ENCODE measurements at regions of chr12 and their contacts with region 1.

Region 1: DNA sequence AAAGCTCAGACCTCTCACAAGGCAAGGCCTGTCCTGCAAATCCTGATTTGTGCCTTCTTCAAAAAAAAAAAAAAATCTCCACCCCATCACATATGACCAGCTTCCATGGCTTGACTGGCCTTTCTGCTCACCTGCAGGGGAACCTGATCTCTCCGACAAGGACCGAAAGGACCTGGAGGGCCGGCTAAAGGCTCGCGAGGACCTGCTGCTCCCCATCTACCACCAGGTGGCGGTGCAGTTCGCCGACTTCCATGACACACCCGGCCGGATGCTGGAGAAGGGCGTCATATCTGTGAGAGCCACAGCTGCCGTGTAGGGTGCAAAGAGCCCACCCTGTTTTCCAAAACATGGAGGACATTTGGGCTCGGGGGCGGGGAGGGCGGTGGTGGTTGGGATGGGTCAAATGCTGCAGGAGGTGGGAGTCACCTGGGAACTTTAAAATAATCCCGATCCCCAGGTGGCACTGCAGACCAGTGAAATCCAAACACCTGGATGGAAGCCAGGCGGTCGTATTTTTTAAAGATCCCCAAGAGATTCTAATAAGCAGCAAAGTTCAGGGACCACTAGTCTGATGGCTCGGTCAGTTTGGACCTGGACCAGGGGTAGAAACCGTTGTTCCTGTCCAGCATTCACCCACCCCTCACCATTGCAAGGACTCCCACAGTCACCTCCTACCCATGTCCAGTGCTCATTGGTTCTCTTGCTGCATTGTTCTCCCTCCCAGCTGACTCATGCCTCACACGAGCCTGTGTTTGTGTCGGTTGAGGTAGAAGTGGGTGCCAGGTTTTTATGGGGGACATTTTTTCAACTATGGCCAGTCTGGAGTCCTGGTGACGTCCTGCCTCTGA is 44.8 kb downstream of the FOXN4 start:
- DNase-seq: peak; percentile 7
- H3K4me3 ChIP-seq: no peak overlapping the region
- H3K27ac ChIP-seq: no peak overlapping the region
- H3K27me3 ChIP-seq: no peaks in the 10 kb centered on the region
- CTCF ChIP-seq: peak; percentile 80

Region 2: GRCh38 chr12:109246221-109246620 is 18.1 kb before region 1 on chr12:
- CTCF ChIA-PET with region 1: interaction called, 11 read pairs
- POLR2A ChIA-PET with region 1: no interaction called
- DNase-seq: no peak
- H3K4me3 ChIP-seq: no peak overlapping the region
- H3K27ac ChIP-seq: no peak overlapping the region
- H3K27me3 ChIP-seq: no peaks in the 10 kb centered on the region
- CTCF ChIP-seq: no peak

Region 3: DNA sequence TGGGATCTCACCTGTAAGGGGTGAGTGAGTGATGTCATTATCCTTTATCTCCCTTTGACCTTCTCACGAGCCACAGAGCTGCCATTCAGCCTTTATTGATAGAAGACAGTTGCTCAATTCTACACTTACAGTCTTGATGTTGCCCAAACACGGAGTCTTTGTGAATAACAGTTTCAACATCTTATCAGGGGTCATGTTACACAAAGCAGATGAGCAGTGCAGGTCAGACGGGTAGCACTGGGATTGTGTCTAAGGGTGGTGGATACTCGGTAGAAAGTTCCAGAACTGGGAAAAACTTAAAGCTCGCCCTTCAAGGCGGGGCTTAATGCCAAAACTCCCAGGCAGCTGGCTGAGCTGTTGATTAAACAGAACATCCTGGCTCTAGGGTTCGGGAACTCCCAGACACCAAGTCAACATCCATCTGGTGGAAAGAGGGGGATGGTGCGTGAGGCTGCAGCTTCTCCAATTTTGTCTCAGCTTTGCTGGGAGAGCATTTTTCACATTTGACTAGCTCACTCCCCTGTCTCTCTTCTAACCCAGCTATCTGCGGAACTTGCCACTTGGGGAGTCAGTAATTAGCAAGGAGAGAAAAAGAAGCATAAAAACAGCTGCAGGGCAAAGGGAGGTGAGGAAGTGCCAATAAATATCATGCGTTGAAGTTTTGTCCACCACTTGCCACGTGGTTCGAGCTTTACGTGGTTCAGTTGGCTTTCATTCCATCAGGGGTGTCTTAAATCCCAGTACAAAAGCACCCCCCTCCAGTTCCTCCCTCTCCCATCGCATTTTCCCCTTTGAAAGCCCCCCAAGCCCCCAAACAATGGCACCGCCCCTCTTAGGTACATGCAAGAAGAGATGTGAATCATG is 13.8 kb after region 1 on chr12:
- CTCF ChIA-PET with region 1: interaction called, 12 read pairs
- POLR2A ChIA-PET with region 1: no interaction called
- DNase-seq: peak; percentile 13
- H3K4me3 ChIP-seq: no peak overlapping the region
- H3K27ac ChIP-seq: no peak overlapping the region
- H3K27me3 ChIP-seq: peaks cover 19% of the 10 kb centered on the region
- CTCF ChIP-seq: no peak

Region 4: DNA sequence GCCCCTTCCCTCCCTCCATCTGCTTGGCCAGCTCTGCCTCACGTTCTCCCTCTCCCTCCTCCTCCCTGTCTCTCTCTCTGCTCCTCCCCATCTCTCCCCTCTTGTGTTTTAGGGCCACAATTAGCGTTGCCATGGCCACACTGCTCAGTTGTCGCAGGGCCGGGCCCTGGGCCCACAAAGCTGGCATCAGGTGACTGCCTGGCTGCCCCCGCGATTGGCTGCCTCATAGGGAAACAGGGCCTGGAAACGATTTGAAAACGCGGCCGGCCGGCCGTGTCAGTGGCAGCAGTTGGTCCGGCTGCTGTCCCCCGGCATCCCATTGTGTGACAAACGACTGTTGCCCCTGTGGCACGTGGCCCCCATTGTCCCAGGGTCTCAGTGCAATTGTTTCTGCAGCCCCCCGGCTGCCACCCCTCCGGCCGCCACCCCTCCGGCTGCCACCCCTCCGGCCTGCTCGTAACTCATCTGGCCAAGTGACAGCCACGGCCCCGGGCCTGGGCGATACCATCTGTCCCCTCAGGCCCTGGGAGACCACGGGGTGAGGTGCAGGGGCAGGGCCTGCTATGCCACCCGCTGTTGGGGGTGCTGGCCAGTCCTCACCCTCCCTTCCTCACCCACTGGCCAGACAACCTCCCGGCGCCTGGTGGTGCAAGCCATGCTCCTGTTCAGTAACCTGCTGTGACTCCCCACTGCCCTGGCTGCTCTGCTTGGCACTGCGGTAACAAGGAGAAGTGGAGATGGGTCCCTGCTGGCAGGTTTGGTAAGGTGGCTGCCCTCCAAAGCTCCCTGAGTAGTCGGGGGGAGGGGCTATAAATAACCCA is 27.4 kb after region 1 on chr12:
- CTCF ChIA-PET with region 1: no interaction called
- POLR2A ChIA-PET with region 1: no interaction called
- DNase-seq: no peak
- H3K4me3 ChIP-seq: peak overlapping the region; percentile 13; the same call in 1 of the 2 replicates
- H3K27ac ChIP-seq: no peak overlapping the region
- H3K27me3 ChIP-seq: peaks cover 9% of the 10 kb centered on the region
- CTCF ChIP-seq: no peak

Region 5: GRCh38 chr12:109385339-109386067 is 121.2 kb after region 1 on chr12:
- CTCF ChIA-PET with region 1: interaction called, 54 read pairs
- POLR2A ChIA-PET with region 1: no interaction called
- DNase-seq: peak; percentile 3
- H3K4me3 ChIP-seq: no peak overlapping the region
- H3K27ac ChIP-seq: no peak overlapping the region
- H3K27me3 ChIP-seq: peaks cover 5% of the 10 kb centered on the region
- CTCF ChIP-seq: peak; percentile 65

Region 6: DNA sequence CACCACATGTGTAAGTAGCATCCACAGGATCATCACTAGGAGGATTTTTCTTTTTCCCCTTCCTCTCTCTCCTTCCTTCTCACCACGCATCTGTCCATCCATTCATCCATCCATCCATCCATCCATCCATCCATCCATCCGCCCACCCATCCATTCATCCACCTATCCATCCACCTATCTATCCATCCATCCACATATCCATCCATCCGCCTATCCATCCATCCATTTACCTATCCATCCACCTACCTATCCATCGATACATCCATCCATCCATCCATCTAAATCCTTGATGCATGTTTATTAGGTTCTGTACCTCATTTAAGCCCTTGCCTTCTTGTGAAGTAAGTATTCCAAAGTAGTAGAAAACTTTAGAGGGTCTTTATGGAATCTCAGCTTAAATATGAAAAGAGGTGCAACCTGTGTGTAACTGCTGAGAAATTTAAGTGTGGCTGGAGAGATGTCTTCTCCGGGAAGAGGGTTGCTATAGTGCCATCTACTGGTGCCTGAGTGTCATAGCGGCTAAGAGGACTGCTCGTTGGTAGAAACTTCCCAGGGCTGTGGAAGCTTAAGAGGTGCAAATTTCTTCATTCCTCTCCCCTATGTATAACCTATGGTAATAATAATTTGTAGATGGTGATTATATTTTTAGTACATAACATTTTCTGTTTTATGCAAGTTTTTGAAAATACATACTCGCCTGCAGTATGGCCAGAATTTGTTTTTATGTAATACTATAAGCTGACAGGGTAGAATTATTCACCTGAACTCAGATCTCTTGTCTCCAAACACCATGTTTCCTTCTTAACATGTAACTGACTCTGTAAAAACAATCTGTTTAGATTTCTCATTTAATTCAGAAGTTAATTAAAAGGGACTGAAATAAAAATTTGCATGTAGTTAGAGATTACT is 129.4 kb after region 1 on chr12:
- CTCF ChIA-PET with region 1: interaction called, 37 read pairs
- POLR2A ChIA-PET with region 1: no interaction called
- DNase-seq: peak; percentile 16
- H3K4me3 ChIP-seq: no peak overlapping the region
- H3K27ac ChIP-seq: no peak overlapping the region
- H3K27me3 ChIP-seq: peaks cover 2% of the 10 kb centered on the region
- CTCF ChIP-seq: peak; percentile 97

Measured in AG04450 (cell line).